Mammary epithelial cell (primary cell): ENCODE measurements at regions of chr7 and their contacts with region 1.

Region 1: DNA sequence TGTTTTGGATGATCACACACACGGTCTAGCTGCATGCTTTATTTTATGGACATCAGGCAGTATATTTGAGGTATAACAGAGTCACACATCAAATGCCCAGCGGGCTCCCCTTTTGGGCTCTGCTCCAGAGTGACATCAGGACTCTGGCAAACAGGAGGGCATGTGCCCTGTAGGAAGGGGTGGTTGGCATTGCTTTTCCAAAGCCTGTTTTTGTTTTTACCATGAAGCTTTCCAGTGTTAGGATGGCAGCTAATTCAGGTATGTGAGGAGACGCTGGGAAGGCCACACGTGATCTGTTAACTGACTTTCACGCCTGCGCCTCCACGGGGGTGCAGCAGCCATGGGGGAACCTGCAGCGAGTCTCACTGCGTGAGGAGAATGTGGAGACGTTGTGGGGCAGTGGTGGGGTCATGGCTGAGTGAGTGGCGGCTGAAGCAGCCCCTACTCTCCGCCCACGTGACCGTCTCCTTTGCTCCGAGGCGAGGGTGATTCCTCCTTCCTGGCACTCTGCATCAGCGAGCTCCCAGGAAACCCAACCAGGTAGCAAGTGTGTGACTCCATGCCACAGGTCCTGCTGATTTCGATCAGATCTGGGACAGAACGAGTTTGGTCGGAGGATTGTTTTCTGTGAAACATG is 117.7 kb downstream of the ANKRD61 start:
- DNase-seq: no peak
- H3K4me3 ChIP-seq: no peak overlapping the region
- H3K27ac ChIP-seq: no peak overlapping the region
- H3K4me1 ChIP-seq: no peaks in the 10 kb centered on the region
- H3K27me3 ChIP-seq: no peaks in the 10 kb centered on the region
- CTCF ChIP-seq: no peak

Region 2: GRCh38 chr7:6186593-6186992 is 37.8 kb after region 1 on chr7:
- CTCF ChIA-PET with region 1: no interaction called
- dilution Hi-C with region 1: loop called (anchors 5 kb)
- in situ Hi-C with region 1: no loop called
- intact Hi-C with region 1: no loop called
- DNase-seq: no peak
- H3K4me3 ChIP-seq: no peak overlapping the region
- H3K27ac ChIP-seq: no peak overlapping the region
- H3K4me1 ChIP-seq: no peaks in the 10 kb centered on the region
- H3K27me3 ChIP-seq: no peaks in the 10 kb centered on the region
- CTCF ChIP-seq: no peak

Region 3: GRCh38 chr7:6317797-6318438 is 169.1 kb after region 1 on chr7:
- CTCF ChIA-PET with region 1: no interaction called
- dilution Hi-C with region 1: loop called (anchors 5 kb)
- in situ Hi-C with region 1: no loop called
- intact Hi-C with region 1: no loop called
- DNase-seq: peak; percentile 12
- H3K4me3 ChIP-seq: no peak overlapping the region
- H3K27ac ChIP-seq: no peak overlapping the region
- H3K4me1 ChIP-seq: peaks cover 10% of the 10 kb centered on the region
- H3K27me3 ChIP-seq: no peaks in the 10 kb centered on the region
- CTCF ChIP-seq: no peak